Ovary (tissue), 10 donors: ENCODE measurements at regions of chr10 and their contacts with region 1.

Region 1: DNA sequence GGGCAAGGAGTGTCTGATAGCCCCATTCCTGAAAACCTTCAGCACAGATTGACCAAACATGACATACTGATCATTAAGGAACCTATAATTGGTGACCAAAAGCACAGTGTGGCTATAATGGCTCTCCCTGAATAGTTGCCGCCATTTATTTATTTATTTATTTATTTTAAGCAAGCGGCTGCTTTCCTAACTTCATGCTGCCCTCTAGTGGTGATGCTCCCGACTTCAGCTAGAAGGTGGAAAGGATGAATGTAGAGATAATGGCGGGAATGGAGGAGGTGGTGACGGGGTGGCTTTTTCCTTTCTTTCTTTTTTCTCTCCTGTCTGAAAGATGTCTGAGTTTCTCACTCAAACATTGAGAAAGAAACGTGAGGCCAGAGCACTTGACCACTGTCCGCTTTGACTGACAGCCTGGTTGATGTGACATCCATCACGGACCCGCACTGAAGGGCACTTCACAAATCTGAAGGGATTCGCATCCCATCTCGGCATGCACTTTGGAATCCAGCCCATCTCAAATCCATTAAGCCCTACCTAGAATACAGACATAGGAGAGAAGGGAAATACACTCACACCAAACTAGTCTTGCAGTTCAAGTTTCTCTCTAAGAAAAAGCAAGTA is 1090.1 kb downstream of the KCNMA1 start:
- DNase-seq: peak; percentile 78 to 92 (median 84)
- H3K4me3 ChIP-seq: no peak overlapping the region
- H3K27ac ChIP-seq: no peak overlapping the region
- H3K4me1 ChIP-seq: peaks cover 6% of the 10 kb centered on the region
- H3K27me3 ChIP-seq: no peaks in the 10 kb centered on the region
- CTCF ChIP-seq: peak; percentile 76 to 83 (median 82)
- EP300 ChIP-seq: no peak
- POLR2A ChIP-seq: no peak

Region 2: GRCh38 chr10:76411729-76412435 is 135.6 kb before region 1 on chr10:
- intact Hi-C with region 1: loop called in 1 of 4 experiments (anchors 10 kb)
- DNase-seq: peak; percentile 76 to 84 (median 78)
- H3K4me3 ChIP-seq: no peak overlapping the region
- H3K27ac ChIP-seq: peak overlapping the region in 1 of 2 donors; percentile 57
- H3K4me1 ChIP-seq: peaks cover 18% of the 10 kb centered on the region
- H3K27me3 ChIP-seq: no peaks in the 10 kb centered on the region
- CTCF ChIP-seq: no peak
- EP300 ChIP-seq: no peak
- POLR2A ChIP-seq: no peak

Region 3: GRCh38 chr10:76984559-76985443 is 437.3 kb after region 1 on chr10:
- intact Hi-C with region 1: loop called in 1 of 4 experiments (anchors 10 kb)
- DNase-seq: peak; percentile 68 to 80 (median 72)
- H3K4me3 ChIP-seq: no peak overlapping the region
- H3K27ac ChIP-seq: no peak overlapping the region
- H3K4me1 ChIP-seq: peaks cover 2% of the 10 kb centered on the region
- H3K27me3 ChIP-seq: no peaks in the 10 kb centered on the region
- CTCF ChIP-seq: peak; percentile 57 to 82 (median 76)
- EP300 ChIP-seq: no peak
- POLR2A ChIP-seq: no peak

Region 4: GRCh38 chr10:78381107-78381506 is 1833.6 kb after region 1 on chr10:
- intact Hi-C with region 1: no loop called
- DNase-seq: no peak
- H3K4me3 ChIP-seq: no peak overlapping the region
- H3K27ac ChIP-seq: no peak overlapping the region
- H3K4me1 ChIP-seq: peaks cover 2% of the 10 kb centered on the region
- H3K27me3 ChIP-seq: no peaks in the 10 kb centered on the region
- CTCF ChIP-seq: no peak
- EP300 ChIP-seq: no peak
- POLR2A ChIP-seq: no peak